Mucosa of descending colon (tissue), 3 donors: ENCODE measurements at regions of chr2 and their contacts with region 1.

Region 1: DNA sequence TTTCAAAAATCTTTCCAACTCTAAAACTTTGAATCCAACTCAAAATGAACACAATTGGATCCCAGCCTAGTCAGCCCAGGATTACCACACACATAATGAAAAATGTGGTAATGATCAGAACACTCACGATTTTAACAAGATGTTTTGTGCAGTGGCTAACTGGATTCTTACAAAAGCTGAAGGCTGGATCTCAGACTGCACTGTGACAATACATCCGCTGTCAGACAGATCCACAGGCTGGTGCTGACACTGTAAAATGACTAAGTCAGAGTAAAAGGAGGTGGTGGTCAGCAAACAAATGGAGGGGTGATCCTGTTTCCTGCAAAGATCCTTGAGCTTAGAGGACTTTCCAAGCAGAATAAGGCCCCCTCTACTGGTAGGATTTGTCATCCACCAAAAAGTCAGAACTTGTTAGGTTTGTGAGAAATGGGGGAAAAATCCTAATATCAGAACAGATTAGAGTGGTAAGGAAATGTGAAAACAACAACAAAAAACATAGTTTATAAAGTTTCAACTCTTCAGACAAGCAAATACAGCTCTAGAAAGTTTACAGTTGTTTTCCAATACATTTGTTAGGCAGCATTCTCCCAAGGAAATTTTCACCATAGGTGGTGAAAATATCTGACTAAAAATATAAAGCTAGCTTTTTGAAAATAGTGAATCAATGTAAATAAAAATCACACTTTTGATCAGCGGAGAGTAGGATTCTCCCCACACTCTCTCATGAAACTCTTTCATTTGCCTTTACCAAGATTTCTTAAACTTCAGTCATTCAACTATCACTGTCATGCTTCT is 211.9 kb downstream of the AGPS start:
- DNase-seq: peak in 1 of 3 donors; percentile 54
- ATAC-seq: peak; percentile 64
- H3K4me3 ChIP-seq: no peak overlapping the region
- H3K4me1 ChIP-seq: peaks cover 7% of the 10 kb centered on the region
- CTCF ChIP-seq: peak; percentile 24

Region 2: GRCh38 chr2:177489719-177490301 is 114.7 kb before region 1 on chr2:
- intact Hi-C with region 1: loop called (anchors 10 kb)
- DNase-seq: peak in 1 of 3 donors; percentile 31
- ATAC-seq: no peak
- H3K4me3 ChIP-seq: no peak overlapping the region
- H3K4me1 ChIP-seq: no peaks in the 10 kb centered on the region
- CTCF ChIP-seq: no peak

Region 3: DNA sequence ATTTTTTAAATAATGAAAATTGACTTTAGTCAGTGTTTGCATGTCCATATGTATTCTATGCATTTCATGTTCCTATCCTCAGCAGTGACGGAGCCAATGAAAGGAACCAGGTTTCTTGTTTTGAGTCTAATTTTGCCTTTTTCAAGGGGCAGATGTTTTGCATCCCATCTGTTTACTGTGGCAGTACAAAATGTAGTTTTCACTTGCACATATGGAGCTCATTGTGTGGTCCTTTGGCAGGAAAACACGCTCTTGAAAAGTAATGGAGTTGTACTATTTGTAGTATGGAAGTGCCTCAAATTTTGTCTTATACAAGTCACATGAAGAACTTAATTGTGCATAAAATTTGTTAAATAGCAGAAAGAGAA is 84.1 kb before region 1 on chr2:
- intact Hi-C with region 1: no loop called
- DNase-seq: no peak
- ATAC-seq: no peak
- H3K4me3 ChIP-seq: no peak overlapping the region
- H3K4me1 ChIP-seq: peaks cover 5% of the 10 kb centered on the region
- CTCF ChIP-seq: no peak